ENCODE measurements at regions of chr4 and their contacts with region 1.

Region 1: DNA sequence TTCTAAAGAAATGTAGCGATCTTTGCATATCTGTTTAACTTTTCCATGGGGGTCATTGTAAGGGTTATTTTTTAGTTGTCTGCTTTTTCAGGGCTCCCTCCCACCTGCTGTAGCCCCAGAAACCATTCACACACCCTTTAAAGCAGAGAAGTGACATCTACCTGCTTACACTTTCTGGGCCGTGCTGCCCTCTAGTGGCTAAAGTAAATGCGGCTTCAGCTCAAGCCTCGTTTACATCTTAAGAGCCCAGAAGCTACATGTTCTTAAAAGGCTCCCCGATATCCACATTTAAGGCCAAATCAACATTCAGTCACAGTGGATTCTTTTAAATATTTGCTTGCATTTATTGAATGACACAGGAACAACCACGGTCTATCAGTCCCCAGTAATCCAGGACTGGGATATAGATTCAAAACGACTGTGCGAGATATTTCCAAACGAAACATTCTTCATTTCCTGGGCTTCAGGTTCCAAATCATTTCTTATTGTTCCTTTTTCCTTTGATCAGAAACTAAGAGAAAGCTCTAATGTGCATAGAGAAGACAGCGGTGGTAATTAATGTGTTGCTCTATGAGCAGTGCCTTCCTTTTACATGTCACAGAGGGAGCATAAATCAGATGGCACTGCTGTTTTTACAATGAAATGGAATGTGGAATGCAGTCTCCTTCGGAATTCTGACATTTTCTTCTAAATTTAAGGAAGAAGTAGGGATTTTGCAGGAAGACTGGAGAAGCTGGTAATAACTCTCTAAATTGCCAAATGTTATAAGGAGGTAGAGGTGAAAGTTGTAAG is 119.9 kb downstream of the RASGEF1B start:
- DNase-seq: peak; percentile 56
- H3K4me3 ChIP-seq: no peak overlapping the region
- H3K27ac ChIP-seq: no peak overlapping the region
- H3K27me3 ChIP-seq: no peaks in the 10 kb centered on the region
- CTCF ChIP-seq: peak; percentile 98

Region 2: GRCh38 chr4:81093720-81094401 is 258.0 kb before region 1 on chr4:
- CTCF ChIA-PET with region 1: interaction called, 13 read pairs
- POLR2A ChIA-PET with region 1: no interaction called
- DNase-seq: no peak
- H3K4me3 ChIP-seq: no peak overlapping the region
- H3K27ac ChIP-seq: no peak overlapping the region
- H3K27me3 ChIP-seq: no peaks in the 10 kb centered on the region
- CTCF ChIP-seq: no peak

Region 3: DNA sequence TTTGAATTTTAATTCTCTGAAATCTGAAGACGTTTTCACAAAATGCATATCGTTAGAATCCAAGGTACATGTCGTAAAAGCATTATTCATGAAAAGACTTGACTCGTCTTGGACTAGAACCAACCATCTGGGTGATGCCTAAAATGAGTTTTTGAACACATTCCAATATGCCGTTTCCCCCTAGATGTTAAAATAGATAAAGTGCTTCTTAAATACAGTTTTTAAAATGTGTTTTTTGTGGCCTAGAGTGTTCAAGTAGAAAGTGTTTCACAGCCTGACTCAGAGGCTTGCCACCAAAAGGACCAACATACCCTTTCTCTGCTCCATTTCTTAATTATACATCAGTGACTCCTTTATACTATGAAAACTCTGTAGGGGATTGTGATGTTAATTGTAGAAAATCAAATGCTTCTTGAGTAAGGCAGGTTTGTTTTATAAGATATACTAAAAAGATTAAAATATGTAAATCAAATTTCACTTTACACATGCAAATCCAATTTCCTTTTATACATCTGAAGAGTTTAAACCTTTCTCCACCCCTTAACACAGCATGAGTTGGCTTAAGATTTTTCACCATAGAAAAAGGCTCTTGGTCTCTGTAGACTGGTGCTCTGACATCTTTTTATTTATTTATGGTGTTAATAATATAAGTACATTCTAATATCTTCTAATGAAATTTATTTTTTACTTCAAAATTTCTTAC is 185.2 kb before region 1 on chr4:
- CTCF ChIA-PET with region 1: interaction called, 35 read pairs
- POLR2A ChIA-PET with region 1: no interaction called
- DNase-seq: no peak
- H3K4me3 ChIP-seq: no peak overlapping the region
- H3K27ac ChIP-seq: no peak overlapping the region
- H3K27me3 ChIP-seq: no peaks in the 10 kb centered on the region
- CTCF ChIP-seq: no peak

Region 4: GRCh38 chr4:81214881-81215868 is 136.7 kb before region 1 on chr4 and contains the start of gene PRKG2:
- CTCF ChIA-PET with region 1: interaction called, 59 read pairs
- POLR2A ChIA-PET with region 1: no interaction called
- DNase-seq: no peak
- H3K4me3 ChIP-seq: peak within 1 kb of the TSS; percentile 68
- H3K27ac ChIP-seq: peak within 1 kb of the TSS; percentile 1
- H3K27me3 ChIP-seq: peaks cover 6% of the 10 kb centered on the region
- CTCF ChIP-seq: no peak
- polyA plus RNA-seq, gene PRKG2: 0.74 and 1.6 TPM in 2 replicates

Region 5: DNA sequence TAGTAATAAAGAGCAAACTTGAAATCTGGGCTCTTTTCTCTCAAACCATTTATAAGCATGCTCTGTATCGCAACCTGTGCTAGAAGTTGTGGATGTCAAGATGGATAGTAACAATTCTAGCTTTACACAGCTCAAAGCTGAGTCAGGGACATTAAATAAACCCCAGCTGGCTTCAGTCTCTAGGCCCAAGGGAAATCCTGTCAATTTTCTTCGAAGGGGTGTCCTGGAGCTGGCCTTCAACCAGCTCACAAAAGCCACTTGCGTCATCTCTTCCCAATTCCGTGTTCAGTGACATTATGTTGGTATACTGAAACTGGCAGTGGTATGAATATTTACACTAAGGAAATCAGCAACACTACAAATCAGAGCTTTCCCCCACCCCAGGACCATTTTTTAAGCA is 47.0 kb before region 1 on chr4:
- CTCF ChIA-PET with region 1: interaction called, 10 read pairs
- POLR2A ChIA-PET with region 1: no interaction called
- DNase-seq: no peak
- H3K4me3 ChIP-seq: no peak overlapping the region
- H3K27ac ChIP-seq: no peak overlapping the region
- H3K27me3 ChIP-seq: no peaks in the 10 kb centered on the region
- CTCF ChIP-seq: no peak

Region 6: GRCh38 chr4:81335122-81335912 is 16.5 kb before region 1 on chr4:
- CTCF ChIA-PET with region 1: interaction called, 54 read pairs
- POLR2A ChIA-PET with region 1: no interaction called
- DNase-seq: no peak
- H3K4me3 ChIP-seq: no peak overlapping the region
- H3K27ac ChIP-seq: no peak overlapping the region
- H3K27me3 ChIP-seq: no peaks in the 10 kb centered on the region
- CTCF ChIP-seq: no peak

Measured in AG04450 (cell line).